Stomach (tissue), 19 donors: ENCODE measurements at regions of chr9 and their contacts with region 1.

Region 1: GRCh38 chr9:124940693-124941453 is at the start of gene GOLGA1:
- DNase-seq: peak; percentile 98 to 99
- H3K4me3 ChIP-seq: peak within 1 kb of the TSS; percentile 59 to 85 (median 82)
- H3K27ac ChIP-seq: peak within 1 kb of the TSS; percentile 93 to 98 (median 96)
- H3K4me1 ChIP-seq: peaks cover 10 to 34% (median 20%) of the 10 kb centered on the region in 4 donors
- H3K27me3 ChIP-seq: no peaks in the 10 kb centered on the region
- CTCF ChIP-seq: no peak
- EP300 ChIP-seq: peak; percentile 11
- POLR2A ChIP-seq: peak in 2 of 4 donors; percentile 7 to 78
- total RNA-seq, gene GOLGA1: 16.2 to 88.4 (median 20.4) TPM

Region 2: DNA sequence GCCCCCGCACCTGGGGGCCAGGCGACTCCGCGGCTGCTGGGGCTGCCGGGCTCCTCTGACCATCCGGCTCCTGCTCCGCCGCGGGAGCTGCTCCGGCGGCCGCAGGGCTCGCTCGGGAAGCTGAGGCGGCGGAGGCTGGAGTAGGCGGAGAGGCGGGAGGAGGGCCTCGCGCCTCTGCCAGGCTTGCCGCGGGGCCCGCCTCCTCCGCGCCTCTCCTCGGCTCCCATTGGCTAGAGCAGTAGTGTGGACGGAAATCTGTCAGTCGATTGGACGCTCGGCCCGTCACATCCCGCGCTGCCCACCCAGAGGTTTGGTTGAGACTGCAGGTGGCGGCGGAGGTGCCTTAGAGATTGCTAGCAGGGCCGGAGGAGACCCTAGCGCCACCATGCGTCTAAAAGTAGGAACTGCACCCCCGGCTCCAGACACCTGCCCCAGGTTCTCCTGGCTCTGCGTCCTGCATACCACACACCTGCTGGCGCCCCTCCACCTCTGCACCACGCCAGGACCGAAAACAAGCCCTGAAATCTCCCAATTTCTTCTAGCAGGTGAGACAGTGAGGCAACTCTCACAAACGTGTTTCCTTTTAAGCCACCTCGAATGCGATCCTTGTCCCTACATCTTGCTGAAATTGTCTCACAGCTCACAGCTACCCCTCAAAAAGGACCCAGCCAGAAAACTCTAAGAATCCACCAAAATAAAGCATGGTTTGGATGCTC is 202.7 kb after region 1 on chr9 and contains the start of gene SCAI:
- intact Hi-C with region 1: loop called (anchors 10 kb)
- DNase-seq: peak; percentile 99 to 100
- H3K4me3 ChIP-seq: peak within 1 kb of the TSS; percentile 90 to 98 (median 96)
- H3K27ac ChIP-seq: peak within 1 kb of the TSS in 4 of 5 donors; percentile 75 to 87 (median 83)
- H3K4me1 ChIP-seq: peaks cover 0 to 41% (median 19%) of the 10 kb centered on the region in 4 donors
- H3K27me3 ChIP-seq: no peaks in the 10 kb centered on the region
- CTCF ChIP-seq: peak in 6 of 7 experiments; percentile 92 to 100 (median 100)
- EP300 ChIP-seq: no peak
- POLR2A ChIP-seq: no peak
- total RNA-seq, gene SCAI: 1.2 to 21.0 (median 11.7) TPM

Region 3: DNA sequence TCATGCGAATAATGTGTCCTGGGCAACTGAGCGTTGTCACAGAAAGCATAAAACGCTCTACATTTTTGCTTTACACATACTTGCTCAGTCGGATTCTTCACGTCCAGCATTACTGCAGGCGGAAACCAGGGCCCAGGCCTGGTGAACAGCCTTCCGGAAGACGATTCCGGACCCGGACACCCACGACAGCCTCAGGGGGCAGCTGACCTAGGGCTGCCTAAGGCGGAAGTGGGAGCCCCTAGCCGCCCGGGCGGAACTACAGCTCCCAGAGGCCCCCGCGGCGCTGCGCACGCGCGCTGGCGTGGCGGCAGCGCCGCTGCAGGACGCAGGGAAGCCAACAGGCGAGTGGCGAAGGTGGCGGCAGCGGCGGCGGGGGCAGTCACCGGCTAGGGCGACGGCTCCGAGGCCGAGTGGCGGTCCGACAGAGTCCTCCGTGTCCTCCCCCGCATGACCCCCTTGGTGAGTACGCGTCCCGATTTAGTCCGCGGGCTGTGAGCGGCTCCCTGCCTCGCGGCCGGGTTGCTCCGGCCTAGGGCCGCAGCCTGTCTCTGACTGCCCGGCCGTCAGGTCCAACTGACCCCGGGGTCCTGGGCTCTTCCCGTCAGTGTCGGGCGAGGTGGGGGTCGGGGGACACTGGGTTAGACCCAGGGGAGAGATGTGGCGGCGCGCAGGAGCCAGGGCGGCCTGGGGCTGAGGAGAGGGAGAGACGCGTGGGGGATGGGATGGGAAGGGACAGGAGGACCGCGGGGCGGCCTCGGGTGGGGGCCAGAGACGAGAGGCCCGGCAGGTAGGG is 320.8 kb after region 1 on chr9 and contains the start of gene GAPVD1:
- intact Hi-C with region 1: no loop called
- DNase-seq: peak; percentile 89 to 97
- H3K4me3 ChIP-seq: peak within 1 kb of the TSS; percentile 89 to 100 (median 98)
- H3K27ac ChIP-seq: peak within 1 kb of the TSS; percentile 67 to 93 (median 86)
- H3K4me1 ChIP-seq: peaks cover 15 to 41% (median 26%) of the 10 kb centered on the region in 4 donors
- H3K27me3 ChIP-seq: no peaks in the 10 kb centered on the region
- CTCF ChIP-seq: peak in 4 of 7 experiments; percentile 17 to 57 (median 30)
- EP300 ChIP-seq: no peak
- POLR2A ChIP-seq: no peak
- total RNA-seq, gene GAPVD1: 25.1 to 140 (median 42.6) TPM